Naive thymus-derived CD4-positive, alpha-beta T cell (primary cell): ENCODE measurements at regions of chr2 and their contacts with region 1.

Region 1: DNA sequence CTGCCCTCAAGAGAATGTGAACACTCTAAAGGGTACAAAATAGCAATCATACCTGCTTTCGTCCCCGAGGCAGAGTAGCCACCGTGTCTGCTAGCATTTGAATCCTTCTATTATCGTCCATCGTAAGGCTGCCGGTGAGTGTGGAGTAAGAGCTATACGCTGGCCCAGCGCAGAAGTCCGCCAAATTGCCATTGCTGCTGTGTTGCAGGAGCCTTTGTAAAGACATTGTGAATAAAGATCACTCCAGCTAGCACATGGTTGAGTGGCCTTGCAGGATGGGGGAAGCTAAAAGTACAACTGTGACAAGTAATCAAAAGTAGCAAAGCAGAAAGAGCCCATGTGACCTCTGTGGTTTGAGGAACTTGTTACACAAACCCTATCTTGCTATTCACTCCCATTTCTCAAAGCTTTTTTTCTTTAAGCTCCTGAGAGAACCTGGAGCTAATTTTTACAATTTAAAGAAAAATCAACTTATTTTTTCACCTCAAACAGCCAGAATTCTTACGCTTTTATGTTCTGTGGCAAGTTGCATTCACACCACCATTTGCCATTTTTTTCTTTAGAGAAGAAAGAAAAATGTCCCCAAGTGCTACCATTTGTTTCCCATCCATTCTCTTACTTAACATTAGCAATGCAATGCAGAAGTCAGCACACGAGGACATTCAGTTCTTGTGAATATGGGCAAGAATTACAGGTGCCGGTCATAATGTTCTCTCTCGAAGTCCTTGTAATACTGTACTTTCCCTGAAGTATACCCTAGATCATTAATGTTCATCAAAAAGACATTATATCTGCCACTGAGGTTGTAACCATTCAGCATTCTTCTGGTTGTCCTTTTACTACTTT is at the start of gene CYTIP:
- DNase-seq: peak; percentile 32 to 85 (median 78)
- ATAC-seq: peak; percentile 71
- H3K4me3 ChIP-seq: peak within 1 kb of the TSS; percentile 97
- H3K4me3 Mint-ChIP-seq: peak within 1 kb of the TSS; percentile 92 to 100 (median 97)
- H3K27ac ChIP-seq: peak within 1 kb of the TSS; percentile 89
- H3K27ac Mint-ChIP-seq: peak within 1 kb of the TSS; percentile 95 to 100 (median 98)
- H3K4me1 ChIP-seq: peaks cover 30 to 34% of the 10 kb centered on the region in 2 donors
- H3K4me1 Mint-ChIP-seq: peaks cover 32 to 48% (median 46%) of the 10 kb centered on the region in 7 donors
- H3K27me3 ChIP-seq: no peaks in the 10 kb centered on the region
- H3K27me3 Mint-ChIP-seq: no peaks in the 10 kb centered on the region
- total RNA-seq, gene CYTIP: 290 to 406 (median 363) TPM

Region 2: DNA sequence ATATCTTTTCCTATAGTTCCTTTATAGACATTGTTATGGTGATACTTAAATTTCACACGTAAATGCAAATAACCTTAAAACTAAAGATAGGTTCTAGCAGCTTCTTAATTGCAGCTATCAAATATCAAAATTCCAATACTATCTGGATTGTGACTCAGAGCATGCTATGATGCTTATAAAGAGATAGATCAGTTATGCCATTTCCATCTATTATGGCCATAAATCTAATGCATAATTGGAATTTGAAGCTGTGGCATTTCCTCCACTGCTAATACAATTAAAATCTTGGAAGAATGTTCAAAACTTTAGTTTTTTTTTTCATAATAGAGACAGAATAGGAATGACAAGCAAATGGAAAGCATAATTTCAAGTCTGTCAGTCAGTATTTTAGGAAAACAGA is 407.3 kb before region 1 on chr2:
- CTCF ChIA-PET with region 1: no interaction called
- POLR2A ChIA-PET with region 1: no interaction called
- intact Hi-C with region 1: no loop called
- DNase-seq: no peak
- ATAC-seq: no peak
- H3K4me3 ChIP-seq: no peak overlapping the region
- H3K4me3 Mint-ChIP-seq: no peak overlapping the region
- H3K27ac ChIP-seq: no peak overlapping the region
- H3K27ac Mint-ChIP-seq: no peak overlapping the region
- H3K4me1 ChIP-seq: no peaks in the 10 kb centered on the region
- H3K4me1 Mint-ChIP-seq: no peaks in the 10 kb centered on the region
- H3K27me3 ChIP-seq: no peaks in the 10 kb centered on the region
- H3K27me3 Mint-ChIP-seq: peaks cover 0 to 4% (median 0%) of the 10 kb centered on the region in 5 donors

Region 3: GRCh38 chr2:157327621-157328500 is 116.2 kb before region 1 on chr2:
- CTCF ChIA-PET with region 1: interaction called, 80 read pairs
- POLR2A ChIA-PET with region 1: interaction called, 554 read pairs
- intact Hi-C with region 1: loop called in 1 of 2 experiments (anchors 1 kb)
- DNase-seq: peak; percentile 60 to 89 (median 81)
- ATAC-seq: peak; percentile 97
- H3K4me3 ChIP-seq: no peak overlapping the region
- H3K4me3 Mint-ChIP-seq: peak overlapping the region; percentile 47 to 81 (median 60)
- H3K27ac ChIP-seq: peak overlapping the region; percentile 19
- H3K27ac Mint-ChIP-seq: peak overlapping the region; percentile 18 to 96 (median 85)
- H3K4me1 ChIP-seq: peaks cover 23 to 46% of the 10 kb centered on the region in 2 donors
- H3K4me1 Mint-ChIP-seq: peaks cover 36 to 65% (median 58%) of the 10 kb centered on the region in 7 donors
- H3K27me3 ChIP-seq: no peaks in the 10 kb centered on the region
- H3K27me3 Mint-ChIP-seq: no peaks in the 10 kb centered on the region

Region 4: DNA sequence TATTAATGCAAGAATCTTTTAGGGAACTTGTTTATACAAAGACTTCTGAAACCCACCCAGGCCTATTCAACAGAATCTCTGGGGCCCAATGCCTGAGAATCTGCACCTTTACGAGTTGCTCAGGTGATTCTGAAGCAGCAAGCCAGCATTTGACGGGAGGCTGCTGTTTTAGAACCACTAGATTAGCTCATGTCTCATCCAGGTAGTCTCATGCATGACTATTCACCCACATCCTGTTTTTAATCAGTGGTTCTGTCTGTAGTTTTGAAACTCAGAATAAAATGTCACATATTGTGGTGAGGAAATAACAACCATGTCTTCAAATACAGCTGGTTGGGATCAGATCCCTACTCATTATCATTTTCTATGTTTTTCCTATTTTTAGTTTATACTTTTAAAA is 39.7 kb before region 1 on chr2:
- CTCF ChIA-PET with region 1: interaction called, 19 read pairs
- POLR2A ChIA-PET with region 1: interaction called, 810 read pairs
- intact Hi-C with region 1: loop called in 1 of 2 experiments (anchors 1 kb)
- DNase-seq: peak in 8 of 9 donors; percentile 44 to 92 (median 88)
- ATAC-seq: peak; percentile 98
- H3K4me3 ChIP-seq: peak overlapping the region; percentile 7
- H3K4me3 Mint-ChIP-seq: peak overlapping the region; percentile 8 to 83 (median 74)
- H3K27ac ChIP-seq: peak overlapping the region; percentile 75
- H3K27ac Mint-ChIP-seq: peak overlapping the region; percentile 91 to 100 (median 99)
- H3K4me1 ChIP-seq: peaks cover 33 to 55% of the 10 kb centered on the region in 2 donors
- H3K4me1 Mint-ChIP-seq: peaks cover 31 to 82% (median 77%) of the 10 kb centered on the region in 7 donors
- H3K27me3 ChIP-seq: no peaks in the 10 kb centered on the region
- H3K27me3 Mint-ChIP-seq: no peaks in the 10 kb centered on the region

Region 5: DNA sequence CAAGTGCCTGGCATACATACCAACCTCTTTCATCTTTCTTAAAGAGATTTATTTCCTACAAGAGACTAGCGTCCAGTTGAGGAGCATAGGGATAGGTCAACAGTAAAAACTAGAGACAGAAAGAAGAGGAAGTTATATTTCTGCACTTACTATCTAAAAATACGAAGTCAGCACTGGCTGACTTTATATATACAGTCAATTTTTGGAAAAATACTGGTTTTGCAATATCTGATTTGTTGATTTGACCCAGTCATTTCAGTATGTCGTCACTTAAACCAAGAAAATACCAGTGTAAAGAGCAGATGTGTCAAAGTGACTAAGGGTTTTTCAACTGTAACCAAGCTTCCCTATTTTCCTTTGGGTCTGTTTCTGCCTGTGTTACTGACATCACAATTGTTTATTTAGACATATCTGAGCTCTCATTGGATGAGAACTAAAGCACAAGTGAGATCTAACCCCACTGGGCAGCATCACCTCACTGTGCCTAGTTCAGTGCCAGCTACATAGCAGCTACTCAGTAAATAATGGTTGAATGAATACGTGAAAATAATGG is 23.2 kb before region 1 on chr2:
- CTCF ChIA-PET with region 1: interaction called, 12 read pairs
- POLR2A ChIA-PET with region 1: interaction called, 810 read pairs
- intact Hi-C with region 1: loop called (anchors 1 kb)
- DNase-seq: no peak
- ATAC-seq: peak; percentile 74
- H3K4me3 ChIP-seq: no peak overlapping the region
- H3K4me3 Mint-ChIP-seq: peak overlapping the region in 9 of 10 donors; percentile 30 to 75 (median 66)
- H3K27ac ChIP-seq: peak overlapping the region; percentile 86
- H3K27ac Mint-ChIP-seq: peak overlapping the region; percentile 90 to 98 (median 94)
- H3K4me1 ChIP-seq: peaks cover 59% of the 10 kb centered on the region in 2 donors
- H3K4me1 Mint-ChIP-seq: peaks cover 49 to 91% (median 80%) of the 10 kb centered on the region in 7 donors
- H3K27me3 ChIP-seq: no peaks in the 10 kb centered on the region
- H3K27me3 Mint-ChIP-seq: no peaks in the 10 kb centered on the region

Region 6: DNA sequence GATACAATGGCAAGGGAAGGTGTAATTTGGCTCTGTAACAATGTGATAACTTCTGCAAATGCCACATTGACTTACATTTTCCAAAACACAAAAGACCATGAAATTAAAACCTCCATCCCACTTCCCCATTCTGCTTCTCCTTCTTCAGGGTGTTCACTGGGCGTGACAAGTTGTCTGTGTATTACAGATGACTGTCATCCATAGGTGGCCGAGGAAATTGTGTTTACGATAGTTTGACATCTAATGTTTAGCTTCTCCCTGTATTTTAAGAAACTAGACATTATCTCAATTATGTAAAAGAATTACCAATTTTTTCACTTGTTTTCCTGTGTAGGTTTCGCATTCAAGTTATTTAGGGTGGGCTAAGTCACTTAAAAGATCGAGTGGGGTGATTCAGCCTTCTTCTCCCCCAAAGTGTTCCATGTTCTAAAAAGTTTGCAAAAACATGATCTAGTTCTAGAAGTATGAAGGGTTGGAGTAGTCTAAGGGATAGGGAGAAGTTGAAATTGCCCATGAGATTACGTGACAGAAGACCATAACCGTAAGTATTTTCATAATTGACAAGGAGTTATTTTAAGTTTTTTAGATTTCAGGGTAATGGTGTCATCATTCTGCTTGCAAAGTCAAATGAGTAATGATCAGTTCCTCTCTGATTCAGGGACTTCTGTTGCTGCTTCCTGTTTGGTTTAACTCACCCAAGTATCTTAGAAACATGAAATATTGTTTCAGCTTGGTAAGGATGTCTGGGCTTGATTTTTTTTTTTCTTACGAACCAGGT is 25.1 kb after region 1 on chr2:
- CTCF ChIA-PET with region 1: interaction called, 9 read pairs
- POLR2A ChIA-PET with region 1: interaction called, 297 read pairs
- intact Hi-C with region 1: loop called (anchors 1 kb)
- DNase-seq: peak in 7 of 9 donors; percentile 56 to 83 (median 74)
- ATAC-seq: peak; percentile 90
- H3K4me3 ChIP-seq: no peak overlapping the region
- H3K4me3 Mint-ChIP-seq: peak overlapping the region; percentile 42 to 85 (median 71)
- H3K27ac ChIP-seq: peak overlapping the region; percentile 77
- H3K27ac Mint-ChIP-seq: peak overlapping the region; percentile 88 to 99 (median 97)
- H3K4me1 ChIP-seq: peaks cover 22 to 36% of the 10 kb centered on the region in 2 donors
- H3K4me1 Mint-ChIP-seq: peaks cover 41 to 90% (median 77%) of the 10 kb centered on the region in 7 donors
- H3K27me3 ChIP-seq: no peaks in the 10 kb centered on the region
- H3K27me3 Mint-ChIP-seq: no peaks in the 10 kb centered on the region

Region 7: DNA sequence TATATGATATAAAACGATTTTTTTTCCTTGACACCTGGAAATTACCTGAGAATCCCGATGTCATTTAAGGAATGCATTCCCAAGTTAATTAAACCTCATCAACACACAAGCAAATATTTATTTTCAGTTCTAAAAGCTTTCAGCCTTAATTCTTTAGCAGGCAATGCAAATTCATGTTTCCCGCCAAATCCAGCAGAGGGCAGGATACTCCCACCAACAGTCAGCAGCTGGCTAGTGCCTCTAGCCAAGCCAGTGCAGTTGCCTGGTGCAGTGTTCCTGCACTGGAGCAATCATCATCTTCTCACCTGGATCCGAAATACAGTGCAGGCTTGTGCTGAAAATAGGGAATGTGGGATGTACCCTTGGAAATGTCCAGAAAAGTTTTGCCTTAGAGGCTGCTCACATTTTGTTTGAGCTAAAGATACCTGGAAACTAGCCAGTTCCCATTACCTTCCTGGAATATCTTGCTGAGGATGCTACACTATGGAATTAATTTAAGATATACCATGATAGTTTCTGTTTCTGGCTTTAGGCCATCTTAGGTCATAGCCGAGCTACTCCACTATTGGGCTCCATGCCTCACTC is 48.3 kb after region 1 on chr2:
- CTCF ChIA-PET with region 1: interaction called, 16 read pairs
- POLR2A ChIA-PET with region 1: interaction called, 12 read pairs
- intact Hi-C with region 1: loop called (anchors 1 kb)
- DNase-seq: peak; percentile 41 to 79 (median 68)
- ATAC-seq: peak; percentile 91
- H3K4me3 ChIP-seq: no peak overlapping the region
- H3K4me3 Mint-ChIP-seq: peak overlapping the region in 6 of 10 donors; percentile 1 to 39 (median 14)
- H3K27ac ChIP-seq: no peak overlapping the region
- H3K27ac Mint-ChIP-seq: peak overlapping the region in 3 of 9 donors; percentile 9 to 19 (median 13)
- H3K4me1 ChIP-seq: peaks cover 0 to 21% of the 10 kb centered on the region in 2 donors
- H3K4me1 Mint-ChIP-seq: peaks cover 10 to 67% (median 59%) of the 10 kb centered on the region in 7 donors
- H3K27me3 ChIP-seq: no peaks in the 10 kb centered on the region
- H3K27me3 Mint-ChIP-seq: no peaks in the 10 kb centered on the region

Region 8: DNA sequence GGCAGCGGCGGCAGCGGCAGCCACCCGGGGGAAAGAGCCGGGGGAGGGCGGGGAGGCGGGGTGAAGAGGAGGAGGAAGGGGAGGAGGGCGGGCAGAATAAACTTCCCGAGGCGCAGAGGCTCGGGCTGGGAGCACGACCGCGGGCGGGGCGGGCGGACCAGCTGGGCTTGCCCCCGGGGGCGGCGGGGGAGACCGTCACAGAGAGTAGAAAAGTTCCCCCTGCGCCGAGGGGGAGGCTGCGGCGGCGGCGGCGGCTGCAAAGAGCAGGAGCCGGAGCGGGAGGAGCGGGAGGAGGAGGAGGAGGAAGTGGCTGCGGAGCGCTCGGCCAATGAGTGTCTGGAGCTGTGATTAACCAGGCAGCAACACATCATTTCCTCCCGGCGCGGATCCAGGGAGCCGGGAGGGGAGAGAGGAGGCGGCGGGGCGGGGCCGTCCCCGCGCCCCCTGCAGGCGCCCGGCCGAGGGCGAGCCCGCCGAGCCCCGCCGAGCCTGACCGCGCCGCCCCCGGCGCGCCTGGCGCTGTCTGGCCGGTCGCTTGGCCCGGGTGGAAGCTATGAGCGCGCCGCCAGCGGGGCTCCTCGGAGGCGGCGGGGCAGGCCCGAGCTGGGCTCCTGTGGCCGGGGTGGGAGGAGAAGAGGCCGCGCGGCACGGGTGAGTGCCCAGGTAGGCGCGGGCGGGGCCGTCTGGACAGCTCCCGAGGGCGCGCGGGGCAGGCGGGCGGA is 432.2 kb after region 1 on chr2 and contains the start of gene ACVR1:
- CTCF ChIA-PET with region 1: no interaction called
- POLR2A ChIA-PET with region 1: interaction called, 4 read pairs
- intact Hi-C with region 1: loop called in 1 of 2 experiments (anchors 5 kb)
- DNase-seq: peak; percentile 68 to 85 (median 75)
- ATAC-seq: peak; percentile 86
- H3K4me3 ChIP-seq: peak within 1 kb of the TSS; percentile 60
- H3K4me3 Mint-ChIP-seq: peak within 1 kb of the TSS; percentile 90 to 98 (median 96)
- H3K27ac ChIP-seq: peak within 1 kb of the TSS; percentile 77
- H3K27ac Mint-ChIP-seq: peak within 1 kb of the TSS; percentile 83 to 96 (median 90)
- H3K4me1 ChIP-seq: peaks cover 12 to 19% of the 10 kb centered on the region in 2 donors
- H3K4me1 Mint-ChIP-seq: peaks cover 24 to 63% (median 53%) of the 10 kb centered on the region in 7 donors
- H3K27me3 ChIP-seq: no peaks in the 10 kb centered on the region
- H3K27me3 Mint-ChIP-seq: no peaks in the 10 kb centered on the region
- total RNA-seq, gene ACVR1: 13.3 to 42.0 (median 20.6) TPM